CD8-positive, alpha-beta T cell (primary cell): ENCODE measurements at regions of chr14 and their contacts with region 1.

Region 1: GRCh38 chr14:74612350-74613021 is 449 bp upstream of the LTBP2 start:
- DNase-seq: peak; percentile 70 to 92 (median 83)
- ATAC-seq: peak; percentile 85
- H3K4me3 ChIP-seq: peak overlapping the region; percentile 64 to 79
- H3K4me3 Mint-ChIP-seq: peak overlapping the region; percentile 79
- H3K27ac ChIP-seq: no peak overlapping the region
- H3K27ac Mint-ChIP-seq: no peak overlapping the region
- H3K4me1 ChIP-seq: peaks cover 16% of the 10 kb centered on the region
- H3K4me1 Mint-ChIP-seq: peaks cover 39% of the 10 kb centered on the region
- H3K27me3 ChIP-seq: no peaks in the 10 kb centered on the region
- H3K27me3 Mint-ChIP-seq: no peaks in the 10 kb centered on the region
- CTCF ChIP-seq: peak; percentile 56

Region 2: DNA sequence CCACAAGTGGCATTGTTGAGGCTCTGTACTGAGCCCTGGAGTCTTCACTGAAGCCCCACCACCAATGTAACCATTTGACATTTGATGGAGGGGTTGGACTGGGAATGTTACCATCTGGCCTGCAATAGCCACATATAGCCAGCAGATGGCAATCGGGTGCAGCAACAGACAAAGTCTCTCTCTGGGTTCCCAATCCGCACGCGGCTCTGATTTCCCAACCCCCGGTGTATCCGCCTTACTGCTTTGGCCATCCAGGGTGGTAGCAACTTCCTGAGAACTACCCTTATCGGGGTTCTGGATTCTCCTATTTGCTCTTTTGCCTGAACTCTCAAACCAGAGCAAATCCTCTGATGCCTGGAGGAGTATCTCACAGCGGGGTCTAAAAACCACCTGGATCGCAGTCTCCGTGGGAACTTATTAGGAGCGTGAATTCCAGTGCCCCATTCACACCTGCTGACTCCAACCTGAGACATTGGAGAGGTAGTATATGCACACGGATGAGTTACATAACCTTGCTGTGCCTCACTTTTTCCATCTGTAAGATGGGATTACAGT is 250.0 kb before region 1 on chr14:
- CTCF ChIA-PET with region 1: interaction called, 4 read pairs
- POLR2A ChIA-PET with region 1: no interaction called
- intact Hi-C with region 1: loop called in 1 of 2 experiments (anchors 2 kb)
- DNase-seq: peak; percentile 28 to 78 (median 65)
- ATAC-seq: peak; percentile 75
- H3K4me3 ChIP-seq: no peak overlapping the region
- H3K4me3 Mint-ChIP-seq: no peak overlapping the region
- H3K27ac ChIP-seq: no peak overlapping the region
- H3K27ac Mint-ChIP-seq: no peak overlapping the region
- H3K4me1 ChIP-seq: peaks cover 3% of the 10 kb centered on the region
- H3K4me1 Mint-ChIP-seq: no peaks in the 10 kb centered on the region
- H3K27me3 ChIP-seq: no peaks in the 10 kb centered on the region
- H3K27me3 Mint-ChIP-seq: peaks cover 8% of the 10 kb centered on the region
- CTCF ChIP-seq: peak; percentile 94

Region 3: GRCh38 chr14:74531467-74531866 is 81.0 kb before region 1 on chr14:
- CTCF ChIA-PET with region 1: no interaction called
- POLR2A ChIA-PET with region 1: no interaction called
- intact Hi-C with region 1: no loop called
- DNase-seq: no peak
- ATAC-seq: no peak
- H3K4me3 ChIP-seq: no peak overlapping the region
- H3K4me3 Mint-ChIP-seq: no peak overlapping the region
- H3K27ac ChIP-seq: no peak overlapping the region
- H3K27ac Mint-ChIP-seq: no peak overlapping the region
- H3K4me1 ChIP-seq: no peaks in the 10 kb centered on the region
- H3K4me1 Mint-ChIP-seq: peaks cover 3% of the 10 kb centered on the region
- H3K27me3 ChIP-seq: no peaks in the 10 kb centered on the region
- H3K27me3 Mint-ChIP-seq: no peaks in the 10 kb centered on the region
- CTCF ChIP-seq: no peak

Region 4: GRCh38 chr14:74638066-74638465 is 25.6 kb after region 1 on chr14:
- CTCF ChIA-PET with region 1: interaction called, 15 read pairs
- POLR2A ChIA-PET with region 1: no interaction called
- intact Hi-C with region 1: no loop called
- DNase-seq: peak in 2 of 9 experiments; percentile 36 to 43
- ATAC-seq: no peak
- H3K4me3 ChIP-seq: no peak overlapping the region
- H3K4me3 Mint-ChIP-seq: no peak overlapping the region
- H3K27ac ChIP-seq: no peak overlapping the region
- H3K27ac Mint-ChIP-seq: no peak overlapping the region
- H3K4me1 ChIP-seq: no peaks in the 10 kb centered on the region
- H3K4me1 Mint-ChIP-seq: no peaks in the 10 kb centered on the region
- H3K27me3 ChIP-seq: no peaks in the 10 kb centered on the region
- H3K27me3 Mint-ChIP-seq: peaks cover 3% of the 10 kb centered on the region
- CTCF ChIP-seq: no peak

Region 5: DNA sequence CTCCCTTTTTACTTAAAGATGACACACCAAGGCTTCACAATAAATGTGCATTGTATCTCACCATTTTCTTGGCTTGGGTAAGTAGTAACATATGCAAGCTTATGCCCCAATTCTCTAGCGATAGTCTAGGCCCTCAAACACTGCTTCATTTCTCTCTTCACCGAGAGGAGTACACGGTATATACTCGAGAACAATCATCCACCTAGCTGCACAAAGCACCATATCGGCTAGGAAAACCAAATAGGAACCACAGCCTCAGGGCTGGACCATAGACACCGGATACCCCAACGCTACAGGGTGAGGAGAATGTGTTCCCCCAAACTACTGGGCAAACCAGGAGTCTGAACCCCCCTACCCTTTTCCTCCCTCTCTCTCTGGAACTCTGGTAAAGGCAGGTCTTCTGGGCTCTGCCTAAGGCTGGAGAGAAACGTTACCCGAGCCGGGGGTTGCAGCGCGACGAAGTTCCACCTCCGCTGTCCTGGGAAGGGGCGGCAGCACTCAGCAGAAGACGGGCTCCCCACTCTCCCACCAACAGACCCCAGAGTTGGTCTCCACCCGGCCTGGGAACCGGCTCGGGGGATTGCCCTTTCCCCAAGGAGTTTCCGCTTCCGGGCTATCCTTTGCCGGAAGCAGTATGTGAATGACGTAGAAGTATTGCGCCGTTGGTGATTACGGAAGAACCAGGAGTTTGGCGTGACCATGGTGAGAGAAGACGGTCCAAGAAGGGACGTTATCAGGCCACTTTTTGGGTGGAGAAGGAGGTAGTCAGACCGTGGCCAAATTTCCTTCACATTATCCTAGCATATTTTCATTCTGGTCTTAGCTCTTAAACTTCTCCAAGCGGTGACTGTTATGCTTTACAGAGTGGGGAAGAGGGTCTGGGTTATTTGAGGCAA is 100.3 kb after region 1 on chr14 and contains the starts of genes AREL1 and FCF1:
- CTCF ChIA-PET with region 1: interaction called, 14 read pairs
- POLR2A ChIA-PET with region 1: no interaction called
- intact Hi-C with region 1: loop called (anchors 1 kb)
- DNase-seq: peak; percentile 56 to 94 (median 80)
- ATAC-seq: peak; percentile 93
- H3K4me3 ChIP-seq: peak within 1 kb of the TSS; percentile 63 to 87
- H3K4me3 Mint-ChIP-seq: peak within 1 kb of the TSS; percentile 98
- H3K27ac ChIP-seq: peak within 1 kb of the TSS; percentile 78 to 93
- H3K27ac Mint-ChIP-seq: peak within 1 kb of the TSS; percentile 99
- H3K4me1 ChIP-seq: peaks cover 24% of the 10 kb centered on the region
- H3K4me1 Mint-ChIP-seq: peaks cover 65% of the 10 kb centered on the region
- H3K27me3 ChIP-seq: no peaks in the 10 kb centered on the region
- H3K27me3 Mint-ChIP-seq: no peaks in the 10 kb centered on the region
- CTCF ChIP-seq: no peak
- total RNA-seq, gene AREL1: 44.5 to 60.1 TPM
- total RNA-seq, gene FCF1: 32.6 to 34.0 TPM

Region 6: DNA sequence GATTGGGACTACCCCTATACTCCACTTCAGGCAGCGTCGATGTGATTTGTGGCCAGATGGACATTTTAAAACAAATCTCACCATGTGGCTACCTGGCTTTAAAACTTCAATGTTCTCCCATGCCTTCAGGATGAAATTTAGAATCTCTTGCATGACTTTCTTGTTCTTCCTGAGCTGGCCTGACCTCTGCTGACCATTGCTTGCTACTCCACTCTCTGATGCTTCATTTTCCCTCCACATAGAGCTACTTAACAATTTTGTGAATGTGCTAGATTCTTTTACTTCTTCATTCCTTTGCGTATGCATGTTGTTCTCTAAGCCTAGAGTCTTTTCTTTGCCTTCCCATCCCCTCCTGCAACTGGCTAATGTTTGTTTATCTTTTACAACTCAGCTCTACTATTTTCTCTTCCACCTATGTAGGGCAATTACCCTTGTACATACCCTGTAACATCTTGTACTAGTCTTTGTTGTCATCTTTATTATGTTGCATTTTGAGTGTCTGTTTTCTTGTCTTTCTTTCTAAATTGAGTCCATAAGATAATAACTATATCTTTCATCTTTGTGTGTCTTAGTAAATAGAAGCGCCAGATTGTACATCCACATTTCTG is 191.8 kb after region 1 on chr14:
- CTCF ChIA-PET with region 1: interaction called, 22 read pairs
- POLR2A ChIA-PET with region 1: interaction called, 4 read pairs
- intact Hi-C with region 1: loop called (anchors 1 kb)
- DNase-seq: peak in 4 of 9 experiments; percentile 12 to 47 (median 41)
- ATAC-seq: peak; percentile 63
- H3K4me3 ChIP-seq: no peak overlapping the region
- H3K4me3 Mint-ChIP-seq: no peak overlapping the region
- H3K27ac ChIP-seq: no peak overlapping the region
- H3K27ac Mint-ChIP-seq: no peak overlapping the region
- H3K4me1 ChIP-seq: no peaks in the 10 kb centered on the region
- H3K4me1 Mint-ChIP-seq: peaks cover 12% of the 10 kb centered on the region
- H3K27me3 ChIP-seq: no peaks in the 10 kb centered on the region
- H3K27me3 Mint-ChIP-seq: no peaks in the 10 kb centered on the region
- CTCF ChIP-seq: peak; percentile 51

Region 7: GRCh38 chr14:74905375-74906142 is 293.1 kb after region 1 on chr14:
- CTCF ChIA-PET with region 1: interaction called, 13 read pairs
- POLR2A ChIA-PET with region 1: interaction called, 5 read pairs
- intact Hi-C with region 1: loop called (anchors 1 to 5 kb)
- DNase-seq: peak; percentile 58 to 89 (median 81)
- ATAC-seq: peak; percentile 82
- H3K4me3 ChIP-seq: no peak overlapping the region
- H3K4me3 Mint-ChIP-seq: no peak overlapping the region
- H3K27ac ChIP-seq: peak overlapping the region in 1 of 2 experiments; percentile 3
- H3K27ac Mint-ChIP-seq: peak overlapping the region; percentile 55
- H3K4me1 ChIP-seq: peaks cover 5% of the 10 kb centered on the region
- H3K4me1 Mint-ChIP-seq: peaks cover 7% of the 10 kb centered on the region
- H3K27me3 ChIP-seq: no peaks in the 10 kb centered on the region
- H3K27me3 Mint-ChIP-seq: no peaks in the 10 kb centered on the region
- CTCF ChIP-seq: peak; percentile 89

Region 8: DNA sequence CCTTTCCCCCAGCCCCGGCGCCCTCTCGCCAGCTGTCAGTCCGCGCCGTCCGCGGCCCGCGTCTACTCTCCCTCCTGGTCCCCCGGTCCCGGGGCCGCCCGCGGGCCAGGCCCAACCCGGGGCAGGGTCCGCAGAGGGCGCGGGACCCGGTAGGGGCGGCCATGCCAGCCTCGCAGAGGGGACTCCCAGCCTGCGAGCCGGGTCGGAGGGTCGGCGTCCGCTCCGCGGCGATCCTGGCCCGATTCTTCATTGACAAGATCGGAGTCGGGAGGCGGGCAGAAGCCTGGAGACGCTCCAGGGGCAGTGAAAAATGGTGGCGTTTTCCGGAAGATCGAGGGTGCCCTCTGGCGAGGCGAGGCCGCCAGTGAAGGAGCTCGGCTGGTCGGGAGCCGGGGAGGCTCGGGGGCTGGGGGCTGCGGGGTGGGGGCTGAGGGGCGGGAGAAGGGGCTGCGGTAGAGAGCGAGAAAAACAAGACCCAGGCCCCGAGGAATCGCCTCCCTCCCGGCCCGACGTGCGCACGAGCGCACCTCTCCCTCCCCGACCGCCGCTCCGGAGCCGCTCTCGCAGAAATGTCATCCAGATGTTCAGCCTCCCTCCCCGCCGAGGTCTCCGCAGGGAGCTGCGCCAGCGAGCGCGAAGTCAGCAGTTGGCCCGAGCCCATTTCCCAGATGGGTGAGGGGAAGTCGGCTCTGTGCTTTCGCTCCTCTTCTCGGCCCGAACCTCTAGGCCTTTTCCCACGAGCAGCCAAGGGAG is 1370.0 kb after region 1 on chr14:
- CTCF ChIA-PET with region 1: no interaction called
- POLR2A ChIA-PET with region 1: no interaction called
- intact Hi-C with region 1: loop called in 1 of 2 experiments (anchors 10 kb)
- DNase-seq: peak; percentile 57 to 87 (median 77)
- ATAC-seq: peak; percentile 59
- H3K4me3 ChIP-seq: peak overlapping the region; percentile 59 to 87
- H3K4me3 Mint-ChIP-seq: peak overlapping the region; percentile 82
- H3K27ac ChIP-seq: peak overlapping the region; percentile 64 to 75
- H3K27ac Mint-ChIP-seq: peak overlapping the region; percentile 86
- H3K4me1 ChIP-seq: peaks cover 33% of the 10 kb centered on the region
- H3K4me1 Mint-ChIP-seq: peaks cover 57% of the 10 kb centered on the region
- H3K27me3 ChIP-seq: no peaks in the 10 kb centered on the region
- H3K27me3 Mint-ChIP-seq: no peaks in the 10 kb centered on the region
- CTCF ChIP-seq: peak; percentile 48